AG04450 (cell line): ENCODE measurements at regions of chr12 and their contacts with region 1.

Region 1: DNA sequence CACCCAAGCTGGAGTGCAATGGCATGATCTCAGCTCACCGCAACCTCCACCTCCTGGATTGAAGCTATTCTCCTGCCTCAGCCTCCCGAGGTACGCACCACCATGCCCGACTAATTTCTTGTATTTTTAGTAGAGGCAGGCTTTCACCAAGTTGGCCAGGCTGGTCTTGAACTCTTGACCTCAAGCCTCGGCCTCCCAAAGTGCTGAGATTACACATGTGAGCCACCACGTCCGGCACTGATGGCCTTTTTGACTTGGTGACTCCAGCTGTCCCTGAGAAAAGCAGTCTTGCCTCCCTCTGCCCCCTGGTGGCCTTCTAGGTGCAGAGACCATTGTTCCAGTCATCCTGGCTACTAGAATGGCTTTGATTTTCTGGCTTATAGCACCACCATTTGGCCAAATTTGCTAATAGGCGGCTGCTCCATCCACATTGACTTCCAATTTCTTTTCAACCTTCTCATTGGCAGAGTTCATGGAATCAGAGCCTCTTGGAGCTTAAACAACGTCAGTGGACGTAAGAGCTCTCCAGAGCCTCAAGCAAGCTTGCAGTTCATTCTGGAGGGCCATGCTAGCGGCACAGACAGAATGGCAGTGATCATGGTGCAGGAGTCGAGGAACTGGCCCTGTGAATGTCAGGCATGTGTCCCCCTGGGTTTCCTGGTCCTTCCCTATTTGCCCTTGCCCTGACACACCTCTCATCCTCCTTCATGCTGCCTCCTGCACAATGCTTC is 25.4 kb upstream of the EIF4B start:
- DNase-seq: peak; percentile 80
- H3K4me3 ChIP-seq: no peak overlapping the region
- H3K27ac ChIP-seq: no peak overlapping the region
- H3K27me3 ChIP-seq: peaks cover 2% of the 10 kb centered on the region
- CTCF ChIP-seq: peak; percentile 99

Region 2: DNA sequence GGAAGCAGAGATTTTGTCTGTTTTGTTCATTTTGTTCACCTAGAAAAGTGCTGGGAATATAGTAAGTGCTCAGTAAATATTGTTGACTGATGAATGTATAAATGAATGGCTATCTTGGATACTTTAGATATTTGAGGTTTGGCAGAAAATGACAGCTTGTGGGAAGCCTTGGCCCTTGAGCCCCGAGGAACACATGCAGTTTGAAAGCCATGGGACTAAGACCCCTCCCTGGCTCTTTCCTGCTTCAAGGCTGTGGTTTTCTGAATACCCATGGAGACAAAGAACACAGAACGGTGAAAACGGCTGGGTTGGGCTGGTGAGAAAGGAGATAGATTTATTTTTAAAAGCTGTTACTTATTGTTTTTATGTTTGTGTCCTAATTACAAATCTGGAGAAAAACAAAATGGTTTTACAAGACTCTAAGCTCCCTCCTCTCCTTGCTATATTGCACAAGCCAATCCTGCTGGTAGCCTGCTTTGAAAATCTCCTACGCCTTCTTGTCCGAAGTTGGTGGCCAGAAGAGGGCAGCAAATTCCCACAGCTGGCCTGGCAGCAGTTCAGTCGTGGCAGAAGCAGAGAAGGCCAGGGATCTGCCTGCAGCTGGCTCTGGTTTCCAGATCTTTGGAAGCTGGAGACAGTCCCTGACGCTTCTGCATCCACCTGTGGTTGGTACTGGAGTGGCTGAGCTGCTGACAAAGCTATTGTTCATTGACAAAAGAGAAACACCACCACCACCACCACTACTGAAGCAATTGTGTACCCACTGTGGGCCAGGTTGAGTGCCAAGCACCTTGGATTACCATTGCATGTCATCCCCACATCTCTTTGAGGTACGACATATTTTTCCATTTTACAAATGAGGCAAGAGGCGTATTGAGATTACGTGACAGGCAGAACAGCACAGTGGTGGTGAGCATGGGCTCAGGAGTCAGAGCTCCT is 608.4 kb before region 1 on chr12:
- CTCF ChIA-PET with region 1: interaction called, 10 read pairs
- POLR2A ChIA-PET with region 1: no interaction called
- DNase-seq: peak; percentile 72
- H3K4me3 ChIP-seq: no peak overlapping the region
- H3K27ac ChIP-seq: no peak overlapping the region
- H3K27me3 ChIP-seq: peaks cover 35% of the 10 kb centered on the region
- CTCF ChIP-seq: peak; percentile 89

Region 3: DNA sequence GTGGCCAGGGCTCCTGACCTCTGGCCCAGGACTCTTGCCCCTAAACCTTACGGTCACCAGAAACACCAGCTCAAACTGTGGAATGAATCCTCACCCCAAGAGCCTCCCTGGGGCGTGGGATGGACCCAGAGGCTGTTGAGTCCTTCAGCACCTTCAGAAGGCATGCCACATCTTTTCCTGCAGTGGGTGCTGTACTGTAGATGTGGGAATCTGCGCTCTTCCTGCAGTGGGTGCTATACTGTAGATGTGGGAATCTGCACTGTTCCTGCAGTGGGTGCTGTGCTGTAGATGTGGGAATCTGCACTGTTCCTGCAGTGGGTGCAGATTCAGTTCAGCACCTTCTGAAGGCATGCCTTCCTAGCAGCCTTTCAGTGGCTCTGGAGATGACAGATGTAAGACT is 575.9 kb before region 1 on chr12:
- CTCF ChIA-PET with region 1: no interaction called
- POLR2A ChIA-PET with region 1: no interaction called
- DNase-seq: no peak
- H3K4me3 ChIP-seq: no peak overlapping the region
- H3K27ac ChIP-seq: no peak overlapping the region
- H3K27me3 ChIP-seq: peaks cover 15% of the 10 kb centered on the region
- CTCF ChIP-seq: no peak

Region 4: DNA sequence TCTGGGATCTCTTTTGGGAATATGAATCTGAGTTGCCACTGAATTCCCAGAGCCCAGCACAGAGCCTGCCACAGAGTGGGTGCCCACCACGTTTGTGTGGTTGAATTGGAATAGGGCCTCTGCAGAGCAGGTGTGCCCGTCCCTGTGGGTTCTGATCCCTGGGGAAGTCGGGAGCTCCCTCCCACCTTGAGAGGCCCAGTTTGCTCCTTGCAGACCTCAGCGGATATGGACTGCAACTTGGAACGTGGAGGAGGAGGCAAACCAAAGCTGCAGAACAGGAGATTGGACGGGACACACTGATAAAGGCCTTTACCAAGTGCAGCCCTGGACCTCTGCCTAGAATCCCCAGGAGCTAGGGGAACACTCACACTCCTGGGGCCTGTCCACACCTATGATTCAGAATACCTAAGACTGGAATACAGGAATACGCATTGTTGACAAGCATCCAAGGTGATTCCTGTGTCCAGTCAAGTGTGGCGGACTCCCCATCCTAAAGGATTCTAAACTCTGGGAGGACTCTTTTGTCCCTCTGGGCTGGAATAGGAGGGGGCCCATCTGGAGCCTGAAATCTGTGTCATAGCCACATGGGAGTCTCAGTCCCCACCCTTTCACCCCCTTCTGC is 206.1 kb before region 1 on chr12:
- CTCF ChIA-PET with region 1: no interaction called
- POLR2A ChIA-PET with region 1: no interaction called
- DNase-seq: no peak
- H3K4me3 ChIP-seq: no peak overlapping the region
- H3K27ac ChIP-seq: no peak overlapping the region
- H3K27me3 ChIP-seq: peaks cover 16% of the 10 kb centered on the region
- CTCF ChIP-seq: no peak

Region 5: GRCh38 chr12:52879394-52880351 is 101.2 kb before region 1 on chr12:
- CTCF ChIA-PET with region 1: interaction called, 1,204 read pairs
- POLR2A ChIA-PET with region 1: interaction called, 7 read pairs
- DNase-seq: no peak
- H3K4me3 ChIP-seq: peak overlapping the region; percentile 35
- H3K27ac ChIP-seq: no peak overlapping the region
- H3K27me3 ChIP-seq: no peaks in the 10 kb centered on the region
- CTCF ChIP-seq: peak; percentile 87

Region 6: DNA sequence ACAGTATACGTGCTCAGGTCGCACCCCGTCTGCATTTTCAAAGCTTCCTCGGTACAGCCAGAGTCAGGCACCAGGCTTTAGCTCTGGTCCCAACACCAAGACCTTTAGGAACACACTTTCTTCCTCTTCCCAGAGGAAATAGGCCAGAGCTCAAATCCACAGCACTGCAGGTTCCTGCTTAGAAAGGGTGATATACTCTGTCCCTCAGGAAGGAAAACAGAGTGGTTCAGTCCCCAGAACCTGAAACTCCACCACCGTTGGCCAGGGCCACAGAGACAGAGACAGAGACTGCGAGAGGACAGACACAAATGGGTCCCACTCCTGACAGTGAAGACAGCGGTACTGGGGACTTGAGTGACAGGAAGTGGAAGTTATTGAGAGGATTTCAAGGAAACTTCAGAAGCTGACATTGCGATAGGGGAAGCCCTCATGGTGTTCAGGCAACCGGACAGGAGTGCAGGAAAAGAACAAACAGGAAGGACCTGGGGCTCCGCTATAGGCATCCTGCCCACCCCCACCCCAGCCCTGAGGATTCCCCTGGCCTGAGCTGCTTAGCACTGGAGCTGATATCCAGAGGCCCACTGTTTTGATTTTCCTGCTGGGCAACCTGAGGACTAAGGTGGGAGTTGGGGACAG is 70.5 kb before region 1 on chr12:
- CTCF ChIA-PET with region 1: interaction called, 21 read pairs
- POLR2A ChIA-PET with region 1: no interaction called
- DNase-seq: no peak
- H3K4me3 ChIP-seq: no peak overlapping the region
- H3K27ac ChIP-seq: no peak overlapping the region
- H3K27me3 ChIP-seq: no peaks in the 10 kb centered on the region
- CTCF ChIP-seq: no peak

Region 7: GRCh38 chr12:52942066-52942900 is 38.6 kb before region 1 on chr12:
- CTCF ChIA-PET with region 1: interaction called, 31 read pairs
- POLR2A ChIA-PET with region 1: interaction called, 3 read pairs
- DNase-seq: no peak
- H3K4me3 ChIP-seq: no peak overlapping the region
- H3K27ac ChIP-seq: no peak overlapping the region
- H3K27me3 ChIP-seq: no peaks in the 10 kb centered on the region
- CTCF ChIP-seq: no peak

Region 8: DNA sequence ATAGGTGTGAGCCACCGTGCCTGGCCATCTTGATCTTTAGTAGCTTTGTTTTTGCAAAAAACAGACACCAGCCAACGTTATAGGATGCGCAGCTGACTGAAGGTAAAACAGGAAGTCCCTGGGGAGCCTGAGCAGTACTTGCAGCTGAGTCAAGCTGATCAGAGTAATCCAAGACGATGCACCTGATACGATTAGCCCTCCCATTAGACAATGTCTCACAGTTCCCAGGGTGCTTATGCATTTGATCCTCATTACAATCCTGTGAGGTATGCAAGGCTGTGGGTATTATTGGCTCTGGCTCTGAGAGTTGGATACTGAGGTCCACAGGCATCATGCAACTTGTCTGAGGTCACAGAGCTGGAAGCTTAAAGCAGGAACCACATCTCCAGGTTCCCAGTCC is 23.9 kb before region 1 on chr12:
- CTCF ChIA-PET with region 1: interaction called, 14 read pairs
- POLR2A ChIA-PET with region 1: no interaction called
- DNase-seq: no peak
- H3K4me3 ChIP-seq: no peak overlapping the region
- H3K27ac ChIP-seq: no peak overlapping the region
- H3K27me3 ChIP-seq: no peaks in the 10 kb centered on the region
- CTCF ChIP-seq: no peak

Region 9: DNA sequence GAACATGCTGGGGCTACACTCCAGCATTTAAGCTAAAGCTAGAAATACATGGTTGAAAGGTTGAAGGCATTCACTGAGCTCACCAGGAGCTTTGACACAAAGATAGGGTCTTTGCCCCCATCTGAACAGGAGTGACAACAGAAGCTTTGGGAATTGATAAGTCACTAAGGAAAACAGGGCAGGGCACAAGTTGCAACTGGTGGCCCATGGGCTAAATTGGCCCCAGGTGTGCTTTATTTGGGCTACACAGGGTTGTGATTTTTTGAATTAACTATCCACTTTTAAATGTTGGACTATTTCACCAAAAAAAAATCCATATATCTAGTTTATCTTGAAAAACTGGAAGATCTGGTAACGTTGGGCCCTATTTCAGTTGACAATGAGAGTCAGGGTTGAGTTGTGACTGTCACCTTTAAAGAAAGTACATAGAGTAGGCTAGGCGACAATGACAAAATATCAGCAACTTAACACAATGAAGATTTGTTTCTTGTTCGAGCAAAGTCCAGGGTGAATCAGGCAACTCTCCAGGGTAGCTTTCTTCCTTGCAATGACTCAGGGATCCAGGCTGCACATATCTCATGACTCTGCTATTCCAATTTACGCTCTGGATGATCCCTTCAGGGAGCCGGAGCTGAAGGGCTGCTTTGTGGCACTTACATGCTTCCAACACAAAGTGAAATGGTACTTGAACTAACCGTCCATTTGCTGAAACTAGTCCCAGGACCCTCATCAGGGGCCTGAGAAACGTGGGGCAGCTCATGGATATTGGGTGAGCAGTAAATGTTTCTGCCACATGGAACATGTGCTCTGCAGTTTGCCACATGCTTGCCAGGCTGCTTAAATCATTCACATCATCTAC is 12.1 kb after region 1 on chr12:
- CTCF ChIA-PET with region 1: interaction called, 22 read pairs
- POLR2A ChIA-PET with region 1: no interaction called
- DNase-seq: no peak
- H3K4me3 ChIP-seq: no peak overlapping the region
- H3K27ac ChIP-seq: no peak overlapping the region
- H3K27me3 ChIP-seq: no peaks in the 10 kb centered on the region
- CTCF ChIP-seq: no peak